K562 (cell line): ENCODE measurements at regions of chr1 and their contacts with region 1.

Region 1: GRCh38 chr1:110460253-110461220 is 9.6 kb downstream of the PROK1 start:
- DNase-seq: peak; percentile 83 to 89 (median 88)
- ATAC-seq: peak; percentile 93
- H3K4me3 ChIP-seq: no peak overlapping the region
- H3K27ac ChIP-seq: no peak overlapping the region
- H3K4me1 ChIP-seq: peaks cover under 1 to 2% of the 10 kb centered on the region in 2 experiments; a peak in 3 of 5 replicates
- H3K27me3 ChIP-seq: peaks cover 0 to 19% of the 10 kb centered on the region in 2 experiments; a peak in 3 of 5 replicates
- CTCF ChIP-seq: peak; percentile 96 to 99 (median 98)
- EP300 ChIP-seq: no peak
- POLR2A ChIP-seq: no peak
- RAD21 ChIP-seq: peak; percentile 99

Region 2: DNA sequence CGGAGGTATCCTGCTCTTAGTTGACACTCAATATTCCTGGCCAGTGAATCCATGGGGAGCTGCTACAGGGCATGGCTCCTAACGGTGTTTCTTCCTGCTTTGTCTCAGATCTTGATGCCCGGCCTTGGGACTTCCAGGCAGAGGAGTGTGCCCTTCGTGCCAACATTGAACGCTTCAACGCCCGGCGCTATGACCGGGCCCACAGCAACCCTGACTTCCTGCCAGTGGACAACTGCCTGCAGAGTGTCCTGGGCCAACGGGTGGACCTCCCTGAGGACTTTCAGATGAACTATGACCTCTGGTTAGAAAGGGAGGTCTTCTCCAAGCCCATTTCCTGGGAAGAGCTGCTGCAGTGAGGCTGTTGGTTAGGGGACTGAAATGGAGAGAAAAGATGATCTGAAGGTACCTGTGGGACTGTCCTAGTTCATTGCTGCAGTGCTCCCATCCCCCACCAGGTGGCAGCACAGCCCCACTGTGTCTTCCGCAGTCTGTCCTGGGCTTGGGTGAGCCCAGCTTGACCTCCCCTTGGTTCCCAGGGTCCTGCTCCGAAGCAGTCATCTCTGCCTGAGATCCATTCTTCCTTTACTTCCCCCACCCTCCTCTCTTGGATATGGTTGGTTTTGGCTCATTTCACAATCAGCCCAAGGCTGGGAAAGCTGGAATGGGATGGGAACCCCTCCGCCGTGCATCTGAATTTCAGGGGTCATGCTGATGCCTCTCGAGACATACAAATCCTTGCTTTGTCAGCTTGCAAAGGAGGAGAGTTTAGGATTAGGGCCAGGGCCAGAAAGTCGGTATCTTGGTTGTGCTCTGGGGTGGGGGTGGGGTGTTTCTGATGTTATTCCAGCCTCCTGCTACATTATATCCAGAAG is 406.7 kb before region 1 on chr1:
- CTCF ChIA-PET with region 1: interaction called, 6 read pairs
- POLR2A ChIA-PET with region 1: interaction called, 3 read pairs
- in situ Hi-C with region 1: no loop called
- intact Hi-C with region 1: loop called (anchors 10 kb)
- DNase-seq: peak; percentile 79 to 87 (median 84)
- ATAC-seq: peak; percentile 87
- H3K4me3 ChIP-seq: no peak overlapping the region
- H3K27ac ChIP-seq: no peak overlapping the region
- H3K4me1 ChIP-seq: peaks cover 13 to 16% of the 10 kb centered on the region in 2 experiments
- H3K27me3 ChIP-seq: no peaks in the 10 kb centered on the region
- CTCF ChIP-seq: peak; percentile 93 to 99 (median 97)
- EP300 ChIP-seq: no peak
- POLR2A ChIP-seq: no peak
- RAD21 ChIP-seq: peak; percentile 87 to 92

Region 3: GRCh38 chr1:110196917-110197765 is 263.4 kb before region 1 on chr1:
- CTCF ChIA-PET with region 1: interaction called, 58 read pairs
- POLR2A ChIA-PET with region 1: interaction called, 8 read pairs
- in situ Hi-C with region 1: no loop called
- intact Hi-C with region 1: no loop called
- DNase-seq: peak; percentile 66 to 93 (median 91)
- ATAC-seq: peak; percentile 93
- H3K4me3 ChIP-seq: no peak overlapping the region
- H3K27ac ChIP-seq: no peak overlapping the region
- H3K4me1 ChIP-seq: no peaks in the 10 kb centered on the region
- H3K27me3 ChIP-seq: peaks cover 20 to 70% of the 10 kb centered on the region in 2 experiments
- CTCF ChIP-seq: peak; percentile 88 to 96 (median 94)
- EP300 ChIP-seq: no peak
- POLR2A ChIP-seq: no peak
- RAD21 ChIP-seq: peak; percentile 63 to 85

Region 4: GRCh38 chr1:110412576-110412975 is 48.0 kb before region 1 on chr1:
- CTCF ChIA-PET with region 1: interaction called, 40 read pairs
- POLR2A ChIA-PET with region 1: interaction called, 8 read pairs
- in situ Hi-C with region 1: no loop called
- intact Hi-C with region 1: loop called (anchors 1 kb)
- DNase-seq: peak; percentile 84 to 94 (median 86)
- ATAC-seq: peak; percentile 90
- H3K4me3 ChIP-seq: no peak overlapping the region
- H3K27ac ChIP-seq: peak overlapping the region; percentile 11; the same call in 2 of the 3 replicates
- H3K4me1 ChIP-seq: peaks cover 0 to 40% of the 10 kb centered on the region in 2 experiments; a peak in 4 of 5 replicates
- H3K27me3 ChIP-seq: no peaks in the 10 kb centered on the region
- CTCF ChIP-seq: peak; percentile 92 to 98 (median 97)
- EP300 ChIP-seq: peak; percentile 21; the same call in 1 of the 2 replicates
- POLR2A ChIP-seq: no peak
- RAD21 ChIP-seq: peak; percentile 99

Region 5: DNA sequence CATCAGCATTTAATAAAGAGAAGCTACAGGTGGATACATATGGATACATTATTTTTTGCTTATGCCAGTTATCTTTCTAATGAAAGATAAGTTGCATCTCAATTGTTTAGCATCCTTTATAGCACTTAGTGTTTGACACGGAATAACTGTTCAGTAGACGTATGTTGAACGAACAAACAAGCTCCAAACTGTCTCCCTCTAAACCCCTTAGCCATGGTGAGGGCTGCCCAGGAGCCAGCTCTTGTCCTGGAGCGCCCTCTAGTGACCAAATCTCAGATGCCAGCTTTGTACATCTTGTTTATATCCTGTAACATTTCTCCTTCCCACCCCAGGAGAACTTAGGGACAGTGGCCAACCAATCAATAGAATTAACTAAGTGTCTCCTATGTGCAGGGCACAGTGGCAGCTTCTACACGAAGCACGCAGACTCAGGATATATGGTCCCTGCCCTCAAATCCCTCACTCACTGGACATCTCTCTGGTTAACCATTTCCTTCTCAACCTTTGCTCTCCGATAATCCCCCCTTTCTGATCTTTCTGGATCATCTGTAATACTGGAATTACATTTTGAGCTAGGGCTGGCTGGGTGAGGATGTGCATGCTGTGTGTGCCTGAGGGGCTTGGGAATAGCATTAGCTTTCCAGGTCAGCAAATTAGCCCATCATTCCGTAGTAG is 35.5 kb after region 1 on chr1:
- CTCF ChIA-PET with region 1: interaction called, 3 read pairs
- POLR2A ChIA-PET with region 1: interaction called, 5 read pairs
- in situ Hi-C with region 1: no loop called
- intact Hi-C with region 1: loop called (anchors 2 kb)
- DNase-seq: peak; percentile 86 to 91 (median 90)
- ATAC-seq: peak; percentile 96
- H3K4me3 ChIP-seq: no peak overlapping the region
- H3K27ac ChIP-seq: no peak overlapping the region
- H3K4me1 ChIP-seq: no peaks in the 10 kb centered on the region
- H3K27me3 ChIP-seq: peaks cover 8 to 50% of the 10 kb centered on the region in 2 experiments; a peak in 3 of 5 replicates
- CTCF ChIP-seq: peak; percentile 94 to 99 (median 98)
- EP300 ChIP-seq: no peak
- POLR2A ChIP-seq: no peak
- RAD21 ChIP-seq: peak; percentile 94 to 95